ENCODE measurements at regions of chr6 and their contacts with region 1.

Region 1: GRCh38 chr6:148846778-148847761 is 100.2 kb downstream of the UST start:
- DNase-seq: no peak
- H3K4me3 ChIP-seq: no peak overlapping the region
- H3K27ac ChIP-seq: no peak overlapping the region
- H3K4me1 ChIP-seq: no peaks in the 10 kb centered on the region
- H3K27me3 ChIP-seq: no peaks in the 10 kb centered on the region
- CTCF ChIP-seq: no peak

Region 2: DNA sequence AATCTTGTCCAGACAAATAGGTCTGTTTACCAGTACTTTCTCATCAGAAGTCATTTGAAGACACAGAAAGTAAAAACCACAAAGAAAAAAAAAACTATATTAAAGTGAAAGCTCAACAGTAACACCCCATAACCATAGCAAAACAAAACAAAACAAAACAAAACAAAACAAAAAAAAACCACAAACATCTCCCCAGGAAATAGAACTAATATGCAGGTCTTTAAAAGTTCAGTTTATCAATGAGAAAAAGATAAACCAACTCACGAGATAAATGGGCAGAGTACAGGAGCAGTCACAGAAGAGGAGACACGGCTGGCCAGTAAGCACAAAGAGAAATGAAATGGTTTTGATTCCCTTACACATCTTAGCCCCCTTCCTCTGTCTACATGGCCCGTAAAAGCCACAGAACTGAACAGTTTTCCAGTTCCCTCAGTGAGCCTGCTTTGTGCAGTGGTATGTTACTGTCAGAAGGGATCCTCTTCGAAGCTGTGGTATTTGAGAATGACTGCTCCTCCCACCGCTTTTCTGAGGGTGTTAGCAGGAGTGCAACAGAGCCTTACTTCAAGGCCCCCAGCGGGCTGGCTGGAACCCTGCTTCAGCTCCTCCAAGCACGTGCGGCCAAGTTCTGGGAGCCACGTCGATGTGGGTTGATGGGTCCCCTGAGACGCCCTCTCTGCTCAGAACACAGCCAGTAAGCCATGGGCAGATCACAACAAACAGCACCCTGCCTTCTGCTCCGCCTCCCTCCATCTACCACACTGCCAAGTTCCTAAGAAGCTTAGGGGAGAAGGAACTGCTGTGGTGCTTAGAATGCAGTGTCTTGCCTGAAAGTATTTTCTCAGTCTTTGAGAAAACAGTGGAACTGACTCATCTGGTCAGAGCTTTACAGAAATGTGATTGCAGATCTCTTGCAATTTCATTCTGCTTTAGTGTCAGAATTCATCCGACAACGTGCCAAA is 86.2 kb before region 1 on chr6:
- CTCF ChIA-PET with region 1: no interaction called
- dilution Hi-C with region 1: no loop called
- in situ Hi-C with region 1: no loop called
- intact Hi-C with region 1: no loop called
- DNase-seq: peak; percentile 53
- H3K4me3 ChIP-seq: peak overlapping the region; percentile 8 to 21 (median 16)
- H3K27ac ChIP-seq: peak overlapping the region; percentile 20
- H3K4me1 ChIP-seq: peaks cover 16% of the 10 kb centered on the region
- H3K27me3 ChIP-seq: no peaks in the 10 kb centered on the region
- CTCF ChIP-seq: no peak

Region 3: DNA sequence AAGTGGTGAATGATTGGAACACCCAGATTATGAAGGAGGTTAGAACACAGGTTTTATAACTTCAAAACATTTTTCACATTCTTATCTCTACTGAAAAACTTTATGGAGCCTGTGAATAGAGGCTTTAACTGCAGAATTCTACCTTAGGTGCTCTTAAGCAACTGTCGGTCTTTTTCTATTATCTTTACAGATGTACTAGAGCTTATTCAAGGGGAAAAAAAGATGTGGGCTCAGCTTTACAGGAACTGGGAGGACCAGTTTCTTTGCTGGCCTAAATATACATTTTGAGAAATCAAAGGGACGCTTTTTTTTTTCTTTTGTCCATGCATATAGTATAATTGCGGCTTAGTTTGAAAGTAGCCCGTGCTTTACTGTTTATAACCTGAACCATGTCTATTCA is 41.3 kb before region 1 on chr6:
- CTCF ChIA-PET with region 1: no interaction called
- dilution Hi-C with region 1: loop called (anchors 5 kb)
- in situ Hi-C with region 1: no loop called
- intact Hi-C with region 1: no loop called
- DNase-seq: no peak
- H3K4me3 ChIP-seq: no peak overlapping the region
- H3K27ac ChIP-seq: no peak overlapping the region
- H3K4me1 ChIP-seq: peaks cover 2% of the 10 kb centered on the region
- H3K27me3 ChIP-seq: no peaks in the 10 kb centered on the region
- CTCF ChIP-seq: no peak

Region 4: DNA sequence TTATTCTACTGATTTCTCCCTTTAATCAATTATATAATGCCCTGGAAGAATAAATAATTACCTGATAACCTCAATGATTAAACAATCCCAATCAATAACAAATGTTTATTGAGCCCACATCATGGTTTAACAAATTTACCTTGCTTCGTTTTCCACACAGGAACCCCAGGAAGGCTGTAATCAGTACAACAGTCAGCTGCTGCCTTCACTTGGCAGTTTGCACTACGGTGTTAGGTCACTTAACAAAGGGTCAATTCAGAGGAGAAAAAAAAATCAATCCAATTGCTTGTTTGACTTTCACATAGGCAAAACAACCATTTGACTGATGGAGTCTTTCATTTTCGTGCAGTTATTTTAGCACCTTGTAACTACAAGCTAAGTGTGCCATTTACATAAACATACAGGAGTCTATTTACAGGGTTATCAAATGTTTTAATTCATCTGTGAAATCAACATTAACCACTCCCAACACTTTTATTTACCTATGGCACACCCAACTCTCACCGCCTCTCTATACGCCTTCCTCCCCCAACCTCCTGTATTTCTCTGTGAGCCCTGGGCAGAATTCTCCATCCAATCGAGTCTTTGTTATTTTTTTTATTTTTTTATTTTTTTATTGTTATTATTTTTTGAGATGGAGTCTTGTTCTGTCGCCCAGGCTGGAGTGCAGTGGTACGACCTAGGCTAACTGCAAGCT is 330.0 kb after region 1 on chr6:
- CTCF ChIA-PET with region 1: no interaction called
- dilution Hi-C with region 1: no loop called
- in situ Hi-C with region 1: no loop called
- intact Hi-C with region 1: no loop called
- DNase-seq: no peak
- H3K4me3 ChIP-seq: no peak overlapping the region
- H3K27ac ChIP-seq: no peak overlapping the region
- H3K4me1 ChIP-seq: no peaks in the 10 kb centered on the region
- H3K27me3 ChIP-seq: peaks cover 2% of the 10 kb centered on the region
- CTCF ChIP-seq: no peak